Aorta (tissue), 5 donors: ENCODE measurements at regions of chr6 and their contacts with region 1.

Region 1: DNA sequence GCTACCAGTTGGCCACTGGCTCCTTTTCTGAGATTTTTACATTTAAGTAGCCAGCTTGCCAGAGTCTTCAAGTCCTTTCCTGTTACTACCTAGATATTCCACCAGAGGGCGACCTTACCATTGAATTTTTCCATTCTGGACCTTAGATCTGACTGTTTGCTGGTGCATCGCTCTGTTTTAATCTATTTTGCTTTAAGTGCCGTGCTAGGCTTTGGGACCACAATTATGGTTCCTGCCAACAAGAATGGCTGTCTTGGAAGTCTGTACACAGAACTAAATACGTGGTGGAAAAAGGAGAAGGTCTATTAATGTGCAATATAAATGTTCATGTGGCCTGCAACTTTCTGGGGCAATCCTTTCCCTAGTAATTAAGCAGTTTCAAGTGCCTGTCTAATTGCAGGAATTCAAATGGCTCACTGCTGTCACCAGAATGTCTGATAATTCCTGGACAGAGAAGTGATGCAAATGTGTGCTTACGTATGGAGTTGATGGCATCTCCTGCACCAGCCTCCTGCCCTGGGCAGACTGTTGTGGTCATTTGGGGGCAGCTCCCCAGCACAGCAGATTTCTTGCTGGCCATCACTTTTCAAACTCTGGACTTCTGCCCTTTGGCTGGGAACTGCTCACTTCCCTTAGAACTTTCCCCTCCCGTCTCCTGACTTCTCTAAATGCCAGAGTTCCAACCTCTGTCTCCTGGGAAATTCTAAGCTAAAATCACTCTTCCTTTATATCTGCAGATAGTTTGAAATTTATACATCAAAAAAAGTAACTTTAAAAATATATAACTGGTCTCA is 5.6 kb upstream of the HLA-DOA start:
- DNase-seq: peak in 1 of 2 donors; percentile 30
- ATAC-seq: peak; percentile 86
- H3K4me3 ChIP-seq: no peak overlapping the region
- H3K27ac ChIP-seq: no peak overlapping the region
- H3K4me1 ChIP-seq: no peaks in the 10 kb centered on the region
- H3K27me3 ChIP-seq: peaks cover 0 to 4% of the 10 kb centered on the region in 2 donors

Region 2: GRCh38 chr6:33000055-33000454 is 15.0 kb before region 1 on chr6:
- intact Hi-C with region 1: no loop called
- DNase-seq: no peak
- ATAC-seq: no peak
- H3K4me3 ChIP-seq: no peak overlapping the region
- H3K27ac ChIP-seq: no peak overlapping the region
- H3K4me1 ChIP-seq: no peaks in the 10 kb centered on the region
- H3K27me3 ChIP-seq: peaks cover 0 to 2% of the 10 kb centered on the region in 2 donors

Region 3: GRCh38 chr6:33080127-33081089 is 65.4 kb after region 1 on chr6:
- intact Hi-C with region 1: loop called in 1 of 2 experiments (anchors 2 kb)
- DNase-seq: peak; percentile 86
- ATAC-seq: peak; percentile 85
- H3K4me3 ChIP-seq: peak overlapping the region; percentile 63 to 75
- H3K27ac ChIP-seq: peak overlapping the region in 1 of 2 donors; percentile 23
- H3K4me1 ChIP-seq: no peaks in the 10 kb centered on the region
- H3K27me3 ChIP-seq: no peaks in the 10 kb centered on the region

Region 4: GRCh38 chr6:33147807-33148666 is 133.0 kb after region 1 on chr6:
- intact Hi-C with region 1: loop called (anchors 5 to 10 kb)
- DNase-seq: no peak
- ATAC-seq: no peak
- H3K4me3 ChIP-seq: no peak overlapping the region
- H3K27ac ChIP-seq: no peak overlapping the region
- H3K4me1 ChIP-seq: no peaks in the 10 kb centered on the region
- H3K27me3 ChIP-seq: peaks cover 0 to 2% of the 10 kb centered on the region in 2 donors